ENCODE measurements at regions of chr14 and their contacts with region 1.

Region 1: DNA sequence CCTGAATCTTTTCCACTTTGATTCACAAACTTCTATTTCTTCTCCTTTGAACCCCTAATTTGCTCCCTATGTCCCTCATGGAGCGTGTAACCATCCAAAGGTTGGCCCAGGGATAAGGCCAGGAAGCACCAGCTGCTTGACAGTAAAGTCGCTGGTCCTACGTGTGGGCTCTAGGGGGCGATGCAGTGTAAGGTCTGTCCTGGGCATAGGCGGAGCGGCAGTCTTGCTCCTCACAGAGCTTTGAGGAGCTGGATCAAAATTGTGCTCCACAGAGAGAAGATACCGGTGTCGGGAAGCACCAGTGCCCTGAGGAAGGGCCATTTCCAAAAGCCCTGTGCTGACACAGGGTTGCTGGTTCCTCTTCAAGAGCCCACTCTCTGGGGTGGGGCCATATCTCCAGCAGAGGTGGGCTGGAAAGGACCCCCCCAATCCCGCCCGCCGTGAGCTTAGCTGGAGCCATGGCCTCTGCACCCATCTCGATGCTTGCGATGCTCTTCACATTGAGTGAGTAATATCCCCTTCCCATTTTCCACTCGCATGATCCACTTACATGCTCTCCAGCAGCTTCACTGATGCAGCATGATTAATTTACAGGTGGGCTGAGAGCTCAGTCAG is 49.9 kb upstream of the OR4E1 start:
- DNase-seq: peak; percentile 71
- ATAC-seq: peak; percentile 90
- H3K4me3 Mint-ChIP-seq: peak overlapping the region; percentile 70
- H3K27ac Mint-ChIP-seq: peak overlapping the region; percentile 77
- H3K4me1 Mint-ChIP-seq: no peaks in the 10 kb centered on the region
- H3K27me3 Mint-ChIP-seq: peaks cover 21% of the 10 kb centered on the region

Region 2: GRCh38 chr14:21647380-21647779 is 76.2 kb before region 1 on chr14:
- CTCF ChIA-PET with region 1: no interaction called
- POLR2A ChIA-PET with region 1: no interaction called
- intact Hi-C with region 1: no loop called
- DNase-seq: no peak
- ATAC-seq: no peak
- H3K4me3 Mint-ChIP-seq: no peak overlapping the region
- H3K27ac Mint-ChIP-seq: no peak overlapping the region
- H3K4me1 Mint-ChIP-seq: no peaks in the 10 kb centered on the region
- H3K27me3 Mint-ChIP-seq: peaks cover 13% of the 10 kb centered on the region

Region 3: GRCh38 chr14:21711360-21711961 is 12.1 kb before region 1 on chr14:
- CTCF ChIA-PET with region 1: interaction called, 73 read pairs
- POLR2A ChIA-PET with region 1: interaction called, 11 read pairs
- intact Hi-C with region 1: no loop called
- DNase-seq: peak; percentile 37
- ATAC-seq: peak; percentile 47
- H3K4me3 Mint-ChIP-seq: peak overlapping the region; percentile 60
- H3K27ac Mint-ChIP-seq: no peak overlapping the region
- H3K4me1 Mint-ChIP-seq: peaks cover 3% of the 10 kb centered on the region
- H3K27me3 Mint-ChIP-seq: peaks cover 23% of the 10 kb centered on the region

Region 4: GRCh38 chr14:22536853-22537338 is 813.4 kb after region 1 on chr14:
- CTCF ChIA-PET with region 1: interaction called, 5 read pairs
- POLR2A ChIA-PET with region 1: no interaction called
- intact Hi-C with region 1: loop called in 1 of 2 experiments (anchors 5 kb)
- DNase-seq: peak; percentile 94
- ATAC-seq: peak; percentile 84
- H3K4me3 Mint-ChIP-seq: peak overlapping the region; percentile 84
- H3K27ac Mint-ChIP-seq: peak overlapping the region; percentile 99
- H3K4me1 Mint-ChIP-seq: peaks cover 95% of the 10 kb centered on the region
- H3K27me3 Mint-ChIP-seq: no peaks in the 10 kb centered on the region

Measured in activated CD4-positive, alpha-beta T cell treated with anti-CD3 and anti-CD28 coated beads for 36 hours (primary cell).